Sigmoid colon (tissue), 7 donors: ENCODE measurements at regions of chr12 and their contacts with region 1.

Region 1: DNA sequence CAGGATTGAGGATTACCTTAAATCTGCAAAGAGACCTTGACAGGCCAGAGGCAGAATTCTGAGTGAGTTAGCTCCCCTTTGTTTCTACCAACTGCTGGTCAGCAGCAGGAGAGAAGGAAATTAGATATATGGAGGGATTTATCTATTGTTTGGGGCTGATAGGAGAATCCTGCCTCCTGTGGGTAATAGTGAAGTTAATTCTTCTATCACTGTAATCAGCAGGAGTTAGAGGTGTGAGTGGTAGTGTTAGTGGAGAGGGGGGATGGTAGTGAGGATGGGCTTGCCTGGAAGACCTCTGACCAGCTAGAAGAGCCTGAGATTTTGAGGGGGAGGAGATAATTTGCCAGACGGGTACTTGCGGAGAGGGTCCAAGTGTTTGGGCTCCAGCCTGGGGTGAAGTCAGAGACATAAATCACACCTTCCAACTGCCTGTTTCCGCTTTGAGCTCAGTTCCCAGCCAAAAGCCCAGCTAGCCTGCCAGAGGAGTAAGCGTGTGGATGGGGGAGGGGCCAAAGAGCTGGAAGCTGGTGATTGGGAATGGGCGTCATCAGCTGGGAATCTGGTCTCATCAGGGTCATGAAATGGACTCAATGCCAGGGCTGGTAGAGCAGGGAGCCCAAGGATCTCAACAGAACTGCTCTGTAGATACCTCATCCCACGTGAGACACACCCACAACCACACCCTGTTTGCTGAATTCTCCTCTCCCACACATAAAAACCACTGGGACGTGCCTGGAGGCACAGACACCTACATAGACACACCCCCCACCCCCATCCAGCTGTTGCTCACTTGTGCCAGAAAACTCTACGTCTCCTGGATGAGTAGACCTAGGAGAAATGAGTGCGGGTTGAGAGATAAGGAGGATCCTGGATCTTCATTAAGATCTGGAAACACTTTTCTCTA is 13.1 kb upstream of the ITGA5 start:
- DNase-seq: peak; percentile 94
- H3K4me3 ChIP-seq: peak overlapping the region; percentile 15 to 48 (median 37)
- H3K27ac ChIP-seq: peak overlapping the region; percentile 70 to 100 (median 100)
- H3K4me1 ChIP-seq: peaks cover 0 to 88% (median 72%) of the 10 kb centered on the region in 4 donors
- H3K27me3 ChIP-seq: no peaks in the 10 kb centered on the region
- CTCF ChIP-seq: no peak
- EP300 ChIP-seq: peak in 3 of 4 donors; percentile 37 to 93 (median 65)
- POLR2A ChIP-seq: no peak

Region 2: DNA sequence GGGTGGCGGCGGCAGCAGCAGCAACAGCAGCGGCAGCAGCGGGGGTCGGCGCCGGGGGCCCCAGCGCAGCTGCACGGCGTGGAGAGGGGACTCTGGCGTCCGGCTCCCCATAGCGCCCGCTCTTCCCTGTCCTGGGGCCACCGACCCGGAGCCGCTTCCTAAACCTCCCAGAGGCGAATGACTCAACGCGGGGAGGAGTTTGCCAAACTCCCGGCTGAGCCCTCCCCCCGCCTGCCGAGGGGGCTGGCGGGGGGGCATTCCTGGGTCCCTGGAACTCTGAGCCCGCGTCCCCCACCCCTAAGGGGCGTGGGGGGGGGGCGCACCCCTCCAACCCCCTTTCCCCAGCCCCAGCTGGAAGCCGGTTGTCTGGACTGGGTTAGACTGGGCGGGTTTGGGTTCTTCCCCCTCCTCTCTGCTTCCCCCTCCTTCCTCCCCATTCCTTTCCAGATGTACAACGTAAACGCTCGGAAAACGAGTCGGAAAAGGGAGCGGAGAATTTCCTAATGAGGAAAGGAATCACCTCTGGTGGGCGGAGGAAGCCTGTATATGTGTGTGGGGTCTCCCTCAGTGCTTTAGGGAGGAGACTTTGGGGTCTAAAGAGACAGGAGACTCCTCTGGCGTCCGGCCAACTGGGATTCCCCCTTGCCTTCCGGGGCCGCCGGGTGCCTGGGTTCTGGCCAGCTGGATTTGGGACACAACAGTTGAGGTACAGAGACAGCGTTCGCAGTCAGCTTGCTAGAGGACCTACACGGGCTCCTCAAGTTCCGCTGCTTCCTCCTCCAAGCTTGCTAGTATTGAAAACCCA is 12.9 kb before region 1 on chr12 and contains the start of gene ITGA5:
- intact Hi-C with region 1: loop called (anchors 2 kb)
- DNase-seq: peak; percentile 96
- H3K4me3 ChIP-seq: peak within 1 kb of the TSS; percentile 96 to 100 (median 100)
- H3K27ac ChIP-seq: peak within 1 kb of the TSS; percentile 96 to 100 (median 100)
- H3K4me1 ChIP-seq: peaks cover 0 to 75% (median 63%) of the 10 kb centered on the region in 4 donors
- H3K27me3 ChIP-seq: no peaks in the 10 kb centered on the region
- CTCF ChIP-seq: no peak
- EP300 ChIP-seq: peak in 3 of 4 donors; percentile 32 to 84 (median 69)
- POLR2A ChIP-seq: peak; percentile 90 to 95
- total RNA-seq, gene ITGA5: 200 to 765 (median 459) TPM